H1 (cell line): ENCODE measurements at regions of chr10 and their contacts with region 1.

Region 1: DNA sequence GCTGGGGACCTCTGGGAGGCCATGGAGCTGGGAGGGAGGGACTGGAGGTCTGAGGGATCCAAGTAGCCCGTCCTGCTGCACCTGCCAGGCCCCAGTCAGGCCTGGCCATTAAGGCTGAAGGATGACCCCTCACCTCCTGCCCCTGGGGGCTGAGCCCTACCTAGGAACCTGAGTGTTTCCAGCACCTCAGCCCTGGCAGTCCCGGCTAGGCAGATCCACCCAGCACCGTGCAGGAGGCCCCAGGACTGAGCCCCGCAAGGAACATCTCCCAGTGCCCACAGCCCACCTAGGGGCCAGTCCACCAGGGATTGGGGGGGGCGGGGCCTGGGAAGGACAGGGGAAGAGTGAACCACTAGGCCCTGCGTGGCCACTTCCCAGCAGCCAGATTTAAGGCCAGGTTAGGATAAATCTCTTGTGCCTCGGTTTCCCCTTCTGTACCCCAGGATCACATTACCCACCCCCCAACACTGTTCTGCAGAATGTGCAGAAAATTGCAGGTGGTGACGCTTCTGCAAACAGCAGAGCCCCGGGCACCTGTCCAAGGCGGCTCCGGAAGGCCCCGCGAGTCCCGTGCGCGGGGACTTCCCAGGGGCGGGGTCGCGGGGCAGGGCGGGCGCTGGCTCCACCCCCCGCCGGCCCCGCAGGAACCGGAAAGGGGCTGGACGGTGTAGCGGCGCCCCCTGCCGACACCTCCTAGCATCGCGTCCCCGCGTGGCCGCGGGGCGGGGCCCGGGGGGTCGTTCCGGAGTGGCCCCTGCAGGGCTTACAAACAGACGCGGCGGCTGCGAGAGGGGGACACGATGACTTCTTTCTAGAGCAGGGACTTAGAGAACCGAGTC is 55.9 kb downstream of the PWWP2B start:
- DNase-seq: peak in 1 of 2 experiments; percentile 98
- H3K4me3 ChIP-seq: peak overlapping the region in 1 of 4 experiments; percentile 42; a peak in 3 of 8 replicates
- H3K27ac ChIP-seq: no peak overlapping the region
- H3K4me1 ChIP-seq: peaks cover 0 to 16% (median 12%) of the 10 kb centered on the region in 4 experiments; a peak in 6 of 7 replicates
- H3K27me3 ChIP-seq: peaks cover 0 to 2% (median 0%) of the 10 kb centered on the region in 4 experiments; a peak in 2 of 7 replicates
- CTCF ChIP-seq: peak in 2 of 3 experiments; percentile 72 to 96; a peak in 3 of 4 replicates
- EP300 ChIP-seq: 0 out of 3 replicates have a peak, but pooled peaks of 1 of the 2 experiments have one; percentile 40
- POLR2A ChIP-seq: no peak
- RAD21 ChIP-seq: peak; percentile 93 to 98

Region 2: DNA sequence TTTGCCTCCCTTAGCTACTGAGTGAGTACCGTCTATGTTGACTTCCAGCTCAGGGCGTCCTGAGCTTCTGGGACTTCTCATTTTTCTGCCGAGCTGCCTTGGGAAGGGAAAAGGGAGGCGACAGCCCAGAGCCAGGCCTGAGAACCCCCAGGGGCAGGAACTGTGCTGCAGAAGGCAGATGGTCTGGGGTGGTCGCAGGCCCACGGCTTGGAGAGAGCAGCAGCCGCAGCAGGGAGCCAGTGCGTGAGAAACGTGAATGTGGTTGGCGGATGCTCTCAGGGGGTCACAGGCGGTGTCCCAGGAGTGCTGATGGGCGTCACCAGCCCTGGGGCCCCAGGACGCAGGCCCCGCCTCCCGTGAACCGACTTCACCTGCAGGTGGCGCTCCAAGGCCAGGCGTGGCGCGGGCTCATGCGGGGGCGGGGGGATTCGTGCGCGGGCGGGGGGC is 65.1 kb before region 1 on chr10:
- CTCF ChIA-PET with region 1: interaction called, 10 read pairs
- POLR2A ChIA-PET with region 1: no interaction called
- DNase-seq: peak in 1 of 2 experiments; percentile 98
- H3K4me3 ChIP-seq: peak overlapping the region in 2 of 4 experiments; percentile 9 to 41; a peak in 1 of 8 replicates
- H3K27ac ChIP-seq: no peak overlapping the region
- H3K4me1 ChIP-seq: peaks cover 0 to 12% (median 9%) of the 10 kb centered on the region in 4 experiments; a peak in 6 of 7 replicates
- H3K27me3 ChIP-seq: no peaks in the 10 kb centered on the region
- CTCF ChIP-seq: peak in 2 of 3 experiments; percentile 71 to 77; a peak in 3 of 4 replicates
- EP300 ChIP-seq: no peak
- POLR2A ChIP-seq: no peak
- RAD21 ChIP-seq: peak; percentile 68 to 76

Region 3: DNA sequence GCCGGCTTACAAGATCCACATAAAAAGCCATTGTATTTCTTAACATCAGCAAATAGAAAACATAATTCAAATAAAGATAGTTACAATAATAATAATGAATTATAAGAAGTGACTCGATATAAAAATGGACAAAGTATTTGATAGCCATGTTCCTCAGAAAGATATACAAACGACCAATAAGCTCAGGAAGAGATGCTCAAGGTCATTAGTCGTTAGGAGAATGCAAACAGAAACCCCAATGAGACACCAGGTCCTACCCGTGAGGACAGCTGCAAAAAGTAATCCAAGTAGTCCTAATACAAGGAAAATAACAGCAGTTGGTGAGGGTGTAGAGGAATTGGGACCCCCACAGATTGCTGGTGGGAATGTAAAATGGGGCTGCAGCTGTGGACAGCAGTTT is 30.5 kb after region 1 on chr10:
- CTCF ChIA-PET with region 1: no interaction called
- POLR2A ChIA-PET with region 1: no interaction called
- DNase-seq: no peak
- H3K4me3 ChIP-seq: no peak overlapping the region
- H3K27ac ChIP-seq: no peak overlapping the region
- H3K4me1 ChIP-seq: no peaks in the 10 kb centered on the region; a peak in 1 of 7 replicates
- H3K27me3 ChIP-seq: peaks cover 0 to 4% (median 0%) of the 10 kb centered on the region in 4 experiments; a peak in 2 of 7 replicates
- CTCF ChIP-seq: no peak
- EP300 ChIP-seq: no peak
- POLR2A ChIP-seq: no peak
- RAD21 ChIP-seq: no peak